ENCODE measurements at regions of chr17 and their contacts with region 1.

Region 1: DNA sequence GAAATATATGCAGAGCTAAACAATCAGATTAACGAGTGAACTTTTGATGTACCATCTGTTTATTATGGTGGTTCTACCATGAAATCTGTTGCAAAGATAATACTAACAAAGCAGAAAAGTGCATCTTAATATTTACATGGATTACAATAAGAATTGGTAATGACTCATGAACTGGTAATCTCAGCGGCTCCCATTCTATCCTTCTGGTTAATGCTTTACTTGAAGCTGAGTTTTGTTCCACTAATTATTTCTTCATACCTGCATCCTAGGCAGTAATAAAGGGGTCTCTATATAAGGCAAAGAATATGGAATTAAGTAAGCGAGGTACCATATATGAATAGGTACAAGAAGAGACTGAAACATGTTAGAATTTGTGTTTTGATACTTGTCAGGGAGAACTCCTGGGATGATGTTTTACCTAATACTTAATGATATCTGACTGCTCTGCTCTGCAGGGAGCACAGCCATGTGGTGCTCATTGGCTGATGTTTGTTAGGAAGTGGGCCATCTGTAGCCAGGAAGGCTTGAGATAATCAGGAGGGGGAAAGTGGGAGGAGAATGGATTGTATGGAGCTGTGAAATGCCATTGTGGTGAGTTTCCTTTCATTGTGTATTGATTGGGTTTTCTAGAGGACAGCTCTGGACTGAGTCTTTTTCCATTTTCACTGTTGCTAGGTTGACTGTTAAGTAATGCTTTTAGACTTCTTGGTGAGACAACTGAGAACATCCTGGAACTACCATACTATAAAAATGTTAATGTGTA is 52.6 kb downstream of the MAP2K6 start:
- DNase-seq: peak; percentile 46
- H3K4me3 Mint-ChIP-seq: peak overlapping the region; percentile 45
- H3K27ac Mint-ChIP-seq: peak overlapping the region; percentile 84
- H3K4me1 Mint-ChIP-seq: peaks cover 33% of the 10 kb centered on the region
- H3K27me3 Mint-ChIP-seq: no peaks in the 10 kb centered on the region
- CTCF ChIP-seq: no peak

Region 2: DNA sequence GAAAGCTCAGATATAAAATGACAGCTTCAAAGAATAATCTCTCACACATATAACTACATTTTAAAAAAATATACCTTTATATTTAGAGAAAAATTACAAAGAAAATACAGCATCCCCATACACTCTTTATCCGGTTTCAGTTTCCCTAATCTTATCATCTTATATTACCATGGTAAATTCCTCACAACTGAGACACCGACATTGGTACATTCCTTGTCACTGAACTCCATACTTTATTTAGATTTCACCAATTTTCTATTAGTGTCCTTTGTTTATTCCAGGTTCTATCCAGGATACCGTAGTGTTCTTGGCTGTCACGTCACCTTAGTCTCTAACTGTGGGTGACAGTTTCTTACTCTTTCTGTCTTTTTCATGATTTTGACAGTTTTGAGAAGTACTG is 216.4 kb before region 1 on chr17:
- CTCF ChIA-PET with region 1: no interaction called
- intact Hi-C with region 1: no loop called
- DNase-seq: no peak
- H3K4me3 Mint-ChIP-seq: no peak overlapping the region
- H3K27ac Mint-ChIP-seq: no peak overlapping the region
- H3K4me1 Mint-ChIP-seq: no peaks in the 10 kb centered on the region
- H3K27me3 Mint-ChIP-seq: no peaks in the 10 kb centered on the region
- CTCF ChIP-seq: no peak

Region 3: DNA sequence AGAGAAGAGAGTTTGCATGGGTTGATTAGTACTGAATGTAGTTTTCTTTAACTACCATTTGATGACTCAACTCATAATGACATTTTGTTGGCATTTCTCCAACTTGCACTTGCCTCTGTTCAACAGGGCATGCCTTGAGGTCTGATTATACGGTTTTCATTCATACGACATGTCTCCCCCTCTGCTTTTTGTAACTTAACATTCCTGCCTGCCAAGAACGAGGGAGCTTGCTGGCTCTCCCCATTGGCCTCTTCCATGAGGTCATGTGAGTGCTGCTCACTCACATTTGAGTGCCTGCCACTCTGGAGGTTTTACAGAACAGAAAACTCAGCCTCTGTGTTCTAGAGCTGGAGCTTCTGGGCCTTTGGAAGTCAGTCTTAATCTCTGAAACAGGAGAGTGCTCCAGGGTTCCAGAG is 32.9 kb before region 1 on chr17:
- CTCF ChIA-PET with region 1: no interaction called
- intact Hi-C with region 1: loop called (anchors 5 kb)
- DNase-seq: peak; percentile 24
- H3K4me3 Mint-ChIP-seq: no peak overlapping the region
- H3K27ac Mint-ChIP-seq: no peak overlapping the region
- H3K4me1 Mint-ChIP-seq: peaks cover 25% of the 10 kb centered on the region
- H3K27me3 Mint-ChIP-seq: no peaks in the 10 kb centered on the region
- CTCF ChIP-seq: no peak

Region 4: GRCh38 chr17:69539781-69540319 is 72.8 kb after region 1 on chr17:
- CTCF ChIA-PET with region 1: no interaction called
- intact Hi-C with region 1: no loop called
- DNase-seq: no peak
- H3K4me3 Mint-ChIP-seq: no peak overlapping the region
- H3K27ac Mint-ChIP-seq: no peak overlapping the region
- H3K4me1 Mint-ChIP-seq: no peaks in the 10 kb centered on the region
- H3K27me3 Mint-ChIP-seq: no peaks in the 10 kb centered on the region
- CTCF ChIP-seq: no peak

Region 5: DNA sequence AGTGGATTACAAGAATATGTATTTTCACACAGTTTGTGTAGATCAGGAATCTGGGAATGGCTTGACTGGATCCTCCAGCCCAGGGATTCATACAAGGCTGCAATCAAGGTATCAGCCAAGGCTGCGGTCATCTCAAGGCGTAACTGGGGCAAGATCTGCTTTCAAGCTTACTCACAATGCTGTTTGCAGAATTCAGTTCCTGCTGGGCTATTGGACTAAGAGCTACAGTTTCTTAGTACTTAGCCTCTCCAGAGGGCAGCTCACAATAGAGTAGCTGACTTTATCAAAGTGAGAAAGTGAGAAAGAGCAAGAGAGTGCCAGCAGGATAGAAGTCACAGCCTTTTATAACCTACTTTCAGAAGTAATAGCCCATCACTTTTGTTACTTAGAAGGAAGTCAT is 158.4 kb after region 1 on chr17:
- CTCF ChIA-PET with region 1: no interaction called
- intact Hi-C with region 1: no loop called
- DNase-seq: no peak
- H3K4me3 Mint-ChIP-seq: no peak overlapping the region
- H3K27ac Mint-ChIP-seq: no peak overlapping the region
- H3K4me1 Mint-ChIP-seq: no peaks in the 10 kb centered on the region
- H3K27me3 Mint-ChIP-seq: no peaks in the 10 kb centered on the region
- CTCF ChIP-seq: no peak

Measured in Calu3 (cell line).